Sigmoid colon (tissue), 7 donors: ENCODE measurements at regions of chr4 and their contacts with region 1.

Region 1: GRCh38 chr4:53991821-53992220 is 72.6 kb downstream of the CHIC2 start:
- DNase-seq: no peak
- H3K4me3 ChIP-seq: no peak overlapping the region
- H3K27ac ChIP-seq: no peak overlapping the region
- H3K4me1 ChIP-seq: peaks cover 0 to 18% (median 11%) of the 10 kb centered on the region in 4 donors
- H3K27me3 ChIP-seq: no peaks in the 10 kb centered on the region
- CTCF ChIP-seq: no peak
- EP300 ChIP-seq: no peak
- POLR2A ChIP-seq: no peak

Region 2: GRCh38 chr4:54036184-54036583 is 44.4 kb after region 1 on chr4:
- intact Hi-C with region 1: loop called (anchors 2 kb)
- DNase-seq: peak; percentile 64
- H3K4me3 ChIP-seq: no peak overlapping the region
- H3K27ac ChIP-seq: no peak overlapping the region
- H3K4me1 ChIP-seq: peaks cover 0 to 23% (median 14%) of the 10 kb centered on the region in 4 donors
- H3K27me3 ChIP-seq: no peaks in the 10 kb centered on the region
- CTCF ChIP-seq: no peak
- EP300 ChIP-seq: peak in 1 of 4 donors; percentile 53
- POLR2A ChIP-seq: no peak

Region 3: GRCh38 chr4:54233277-54233696 is 241.5 kb after region 1 on chr4:
- intact Hi-C with region 1: no loop called
- DNase-seq: peak; percentile 90
- H3K4me3 ChIP-seq: peak overlapping the region; percentile 39 to 54 (median 49)
- H3K27ac ChIP-seq: peak overlapping the region; percentile 57 to 75 (median 66)
- H3K4me1 ChIP-seq: peaks cover 0 to 54% (median 47%) of the 10 kb centered on the region in 4 donors
- H3K27me3 ChIP-seq: peaks cover 38 to 55% (median 47%) of the 10 kb centered on the region in 3 donors
- CTCF ChIP-seq: peak; percentile 59 to 80 (median 63)
- EP300 ChIP-seq: no peak
- POLR2A ChIP-seq: no peak